Activated CD8-positive, alpha-beta T cell treated with anti-CD3 and anti-CD28 coated beads for 36 hours (primary cell): ENCODE measurements at regions of chr12 and their contacts with region 1.

Region 1: DNA sequence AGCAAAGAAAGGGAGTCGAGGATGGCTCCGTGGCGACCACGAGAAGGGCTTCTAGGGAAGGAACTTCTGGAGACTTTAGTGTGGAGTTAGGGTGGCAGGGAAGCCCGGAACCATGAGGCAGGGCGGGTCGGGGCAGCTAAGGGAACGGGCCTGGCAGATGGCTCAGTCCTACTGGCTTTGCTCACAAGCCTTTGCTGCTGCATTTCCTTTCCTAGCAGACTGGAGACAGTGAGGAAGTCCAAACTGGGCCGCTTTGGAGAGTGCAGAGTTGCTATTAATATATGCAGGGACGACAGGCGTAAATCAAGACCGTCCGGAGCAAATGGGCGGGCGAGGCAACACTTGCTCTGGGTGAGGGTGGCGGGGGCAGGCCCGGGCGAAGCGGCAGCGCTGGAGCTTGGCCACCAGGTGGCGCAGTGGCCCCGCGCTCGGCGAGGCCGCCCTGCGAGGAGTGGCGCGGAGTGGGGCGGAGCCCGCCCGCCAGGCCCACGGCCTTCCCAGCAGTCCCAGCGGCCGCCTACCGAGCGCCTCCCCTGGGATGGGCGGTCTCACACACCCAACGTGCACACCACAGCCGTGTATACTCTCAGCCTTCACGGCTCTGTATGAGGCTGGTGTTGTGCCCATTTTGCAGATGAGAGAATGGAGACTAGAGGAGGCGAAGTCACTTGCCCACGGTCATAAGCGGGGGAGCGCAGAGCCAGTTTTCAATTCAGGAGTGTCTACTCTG is 24.4 kb upstream of the LRTM2 start:
- DNase-seq: peak; percentile 94
- ATAC-seq: peak; percentile 95
- H3K4me3 Mint-ChIP-seq: peak overlapping the region; percentile 85
- H3K27ac Mint-ChIP-seq: peak overlapping the region; percentile 90
- H3K4me1 Mint-ChIP-seq: peaks cover 17% of the 10 kb centered on the region
- H3K27me3 Mint-ChIP-seq: no peaks in the 10 kb centered on the region
- CTCF ChIP-seq: peak; percentile 76

Region 2: GRCh38 chr12:1594261-1595025 is 201.5 kb before region 1 on chr12 and contains the start of gene FBXL14:
- CTCF ChIA-PET with region 1: no interaction called
- POLR2A ChIA-PET with region 1: no interaction called
- intact Hi-C with region 1: no loop called
- DNase-seq: peak; percentile 92
- ATAC-seq: peak; percentile 64
- H3K4me3 Mint-ChIP-seq: peak within 1 kb of the TSS; percentile 95
- H3K27ac Mint-ChIP-seq: peak within 1 kb of the TSS; percentile 88
- H3K4me1 Mint-ChIP-seq: peaks cover 29% of the 10 kb centered on the region
- H3K27me3 Mint-ChIP-seq: no peaks in the 10 kb centered on the region
- CTCF ChIP-seq: no peak
- total RNA-seq, gene FBXL14: 23.3 to 25.1 TPM

Region 3: DNA sequence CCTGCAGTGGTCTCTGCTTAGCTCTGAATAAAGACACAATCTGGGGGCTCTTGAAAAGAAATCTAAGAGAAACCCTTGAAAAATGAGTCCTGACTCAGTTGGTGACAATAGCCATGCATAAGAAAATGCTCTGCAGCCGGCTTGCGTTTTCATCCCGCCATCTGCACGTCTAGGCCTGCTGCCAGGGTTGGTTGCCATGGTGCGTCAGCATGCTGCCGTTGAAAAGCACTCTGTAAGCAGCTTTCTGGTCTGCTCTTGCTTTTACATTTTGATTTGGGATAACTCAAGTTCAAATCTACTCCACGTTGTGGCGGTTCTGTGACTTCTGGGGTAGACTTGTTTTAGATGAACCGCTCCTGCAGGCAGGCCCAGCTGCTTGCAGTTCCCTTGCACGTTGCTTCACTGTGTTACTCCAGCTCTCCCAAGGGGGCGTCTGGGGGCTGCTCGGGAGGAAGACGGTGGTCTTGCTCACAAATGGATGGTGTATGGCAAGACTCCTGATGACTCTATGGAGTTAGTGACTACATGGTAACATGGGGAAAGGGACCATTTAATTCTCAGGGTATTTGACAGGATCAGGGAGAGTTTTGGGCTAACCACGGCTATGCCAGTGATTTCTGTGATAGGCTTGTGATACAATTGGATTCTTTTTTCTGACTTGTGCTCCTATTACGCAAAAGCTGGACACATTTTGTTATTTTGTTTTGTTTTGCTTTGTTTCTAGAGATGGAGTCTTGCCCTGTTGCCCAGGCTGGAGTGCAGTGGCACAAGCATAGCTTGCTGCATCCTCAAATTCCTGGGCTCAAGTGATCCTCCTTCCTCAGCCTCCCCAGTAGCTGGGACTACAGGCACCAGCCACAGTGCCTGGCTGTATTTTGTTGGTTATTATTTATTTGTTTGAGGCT is 151.2 kb before region 1 on chr12:
- CTCF ChIA-PET with region 1: interaction called, 456 read pairs
- POLR2A ChIA-PET with region 1: no interaction called
- intact Hi-C with region 1: no loop called
- DNase-seq: no peak
- ATAC-seq: no peak
- H3K4me3 Mint-ChIP-seq: no peak overlapping the region
- H3K27ac Mint-ChIP-seq: no peak overlapping the region
- H3K4me1 Mint-ChIP-seq: no peaks in the 10 kb centered on the region
- H3K27me3 Mint-ChIP-seq: peaks cover 7% of the 10 kb centered on the region
- CTCF ChIP-seq: no peak

Region 4: DNA sequence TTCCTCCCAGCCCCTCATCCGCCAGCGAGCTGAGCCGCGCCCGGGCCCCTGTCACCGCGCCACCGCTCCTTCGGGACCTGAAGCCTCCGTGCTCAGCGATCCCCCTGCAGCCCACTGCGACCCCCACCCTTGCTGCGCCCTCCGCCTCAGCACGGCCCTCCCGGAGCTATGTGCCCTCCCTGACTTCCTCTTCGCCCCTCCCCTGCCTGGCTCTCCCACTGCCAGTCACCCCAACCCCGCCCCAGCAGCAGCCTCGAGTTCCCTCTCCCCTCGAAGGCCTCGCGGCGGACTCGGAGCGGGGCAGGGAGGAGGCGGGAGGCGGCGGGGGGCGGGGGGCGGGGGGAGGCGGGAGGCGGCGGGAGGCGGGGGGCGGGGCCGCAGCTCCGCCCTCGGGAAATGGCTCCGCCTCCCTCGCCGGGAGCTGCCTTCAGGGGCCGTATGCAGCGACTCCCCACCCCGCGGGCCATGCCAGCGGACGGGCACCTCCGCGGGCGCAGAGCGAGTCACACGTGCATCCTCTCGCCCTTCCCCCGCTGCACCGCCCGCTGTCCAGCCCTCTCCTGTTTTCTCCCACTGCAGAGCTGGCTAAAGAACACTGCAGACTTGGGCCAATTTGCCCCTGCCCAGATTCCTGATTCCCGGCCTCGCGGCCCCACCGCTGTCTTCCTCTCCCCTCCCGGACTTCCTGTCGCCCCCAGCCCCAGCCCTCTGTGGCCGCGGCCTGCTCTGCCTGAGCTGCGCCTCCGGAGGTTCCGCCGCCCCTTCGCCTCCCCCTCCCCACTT is 134.2 kb before region 1 on chr12:
- CTCF ChIA-PET with region 1: interaction called, 456 read pairs
- POLR2A ChIA-PET with region 1: interaction called, 3 read pairs
- intact Hi-C with region 1: no loop called
- DNase-seq: peak; percentile 91
- ATAC-seq: peak; percentile 93
- H3K4me3 Mint-ChIP-seq: peak overlapping the region; percentile 73
- H3K27ac Mint-ChIP-seq: peak overlapping the region; percentile 83
- H3K4me1 Mint-ChIP-seq: peaks cover 36% of the 10 kb centered on the region
- H3K27me3 Mint-ChIP-seq: no peaks in the 10 kb centered on the region
- CTCF ChIP-seq: no peak

Region 5: GRCh38 chr12:1698638-1699214 is 97.2 kb before region 1 on chr12:
- CTCF ChIA-PET with region 1: interaction called, 14 read pairs
- POLR2A ChIA-PET with region 1: interaction called, 3 read pairs
- intact Hi-C with region 1: no loop called
- DNase-seq: no peak
- ATAC-seq: no peak
- H3K4me3 Mint-ChIP-seq: no peak overlapping the region
- H3K27ac Mint-ChIP-seq: no peak overlapping the region
- H3K4me1 Mint-ChIP-seq: peaks cover 58% of the 10 kb centered on the region
- H3K27me3 Mint-ChIP-seq: no peaks in the 10 kb centered on the region
- CTCF ChIP-seq: no peak

Region 6: DNA sequence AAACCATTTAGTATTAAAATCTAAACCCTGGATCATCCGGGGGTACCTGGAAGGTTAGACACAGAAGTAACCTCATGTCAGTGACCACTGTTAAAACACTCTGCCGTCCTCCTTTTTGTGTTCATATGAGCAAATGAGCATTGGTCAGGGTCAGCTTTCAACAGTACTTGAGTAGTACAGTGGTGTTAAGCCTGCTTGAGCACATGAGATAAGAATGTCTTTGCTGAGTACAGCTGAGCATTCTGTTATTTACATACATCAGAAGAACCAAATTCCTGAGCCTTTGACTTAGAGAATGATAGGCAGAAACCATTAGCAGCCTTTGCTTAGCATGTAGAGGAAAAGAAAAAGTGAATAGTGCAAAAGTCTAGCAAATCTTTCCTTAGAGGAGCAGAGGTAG is 14.2 kb before region 1 on chr12:
- CTCF ChIA-PET with region 1: interaction called, 19 read pairs
- POLR2A ChIA-PET with region 1: no interaction called
- intact Hi-C with region 1: no loop called
- DNase-seq: no peak
- ATAC-seq: no peak
- H3K4me3 Mint-ChIP-seq: no peak overlapping the region
- H3K27ac Mint-ChIP-seq: no peak overlapping the region
- H3K4me1 Mint-ChIP-seq: no peaks in the 10 kb centered on the region
- H3K27me3 Mint-ChIP-seq: no peaks in the 10 kb centered on the region
- CTCF ChIP-seq: no peak